Activated CD4-positive, alpha-beta T cell treated with anti-CD3 and anti-CD28 coated beads, Interleukin-2, amount 10 ng/mL, durations not matched to agents 24 days and 14 days (primary cell): ENCODE measurements at regions of chr1 and their contacts with region 1.

Region 1: GRCh38 chr1:183635606-183636333 is at the start of gene ARPC5:
- DNase-seq: peak; percentile 99
- H3K4me3 Mint-ChIP-seq: peak within 1 kb of the TSS; percentile 98
- H3K27ac Mint-ChIP-seq: peak within 1 kb of the TSS; percentile 100
- H3K4me1 Mint-ChIP-seq: peaks cover 29% of the 10 kb centered on the region
- H3K27me3 Mint-ChIP-seq: peaks cover 11% of the 10 kb centered on the region
- total RNA-seq, gene ARPC5: 144 and 149 TPM in 2 replicates

Region 2: DNA sequence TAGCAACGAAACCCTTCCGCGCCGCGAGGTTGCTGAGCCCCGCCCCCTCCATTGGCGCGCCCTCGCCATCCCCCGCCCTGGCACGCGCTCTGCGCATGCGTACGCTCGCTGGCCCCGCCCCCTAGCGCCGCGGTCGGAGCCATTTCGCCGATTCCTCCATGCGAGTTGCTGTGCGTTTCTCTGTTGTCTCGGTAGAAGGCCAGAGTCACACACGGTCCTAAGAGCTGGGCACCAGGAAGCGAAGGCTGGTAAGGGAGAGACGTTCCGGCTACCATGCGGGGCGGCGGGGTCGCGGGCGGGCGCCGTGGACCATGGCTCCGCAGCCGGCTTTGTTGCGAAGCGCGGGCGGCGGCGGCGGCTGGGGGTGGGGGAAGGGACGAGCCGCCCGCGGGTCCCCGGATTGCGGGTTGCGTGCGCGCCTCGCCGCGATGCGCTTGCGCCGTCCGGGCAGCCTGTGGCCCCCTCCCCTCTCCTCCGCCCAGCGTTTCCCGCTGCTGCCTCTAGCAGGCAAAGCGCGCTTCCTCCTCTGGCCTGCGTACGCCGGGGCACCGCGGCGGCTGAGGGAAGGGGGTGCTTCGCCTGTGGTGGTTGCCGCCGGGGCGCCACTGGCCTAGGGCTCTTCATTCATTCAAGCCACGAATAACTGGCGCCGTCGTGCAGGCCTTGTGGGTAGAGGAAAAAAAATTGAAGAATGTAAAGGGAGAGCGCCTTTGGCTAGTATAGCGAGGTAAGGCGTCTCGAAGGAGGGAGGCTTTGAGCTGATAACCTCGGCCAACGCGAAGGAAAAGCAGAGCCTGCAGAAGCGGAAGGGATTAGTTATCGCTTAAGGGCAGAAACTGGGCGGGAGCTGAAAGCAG is 796.3 kb before region 1 on chr1 and contains the start of gene DHX9:
- intact Hi-C with region 1: loop called (anchors 10 kb)
- DNase-seq: peak; percentile 99
- H3K4me3 Mint-ChIP-seq: peak within 1 kb of the TSS; percentile 92
- H3K27ac Mint-ChIP-seq: peak within 1 kb of the TSS; percentile 94
- H3K4me1 Mint-ChIP-seq: peaks cover 37% of the 10 kb centered on the region
- H3K27me3 Mint-ChIP-seq: peaks cover 3% of the 10 kb centered on the region
- total RNA-seq, gene DHX9: 344 and 355 TPM in 2 replicates

Region 3: GRCh38 chr1:183590244-183591191 is 45.3 kb before region 1 on chr1 and contains the start of gene NCF2:
- intact Hi-C with region 1: loop called (anchors 1 kb)
- DNase-seq: peak; percentile 89
- H3K4me3 Mint-ChIP-seq: peak within 1 kb of the TSS; percentile 63
- H3K27ac Mint-ChIP-seq: peak within 1 kb of the TSS; percentile 75
- H3K4me1 Mint-ChIP-seq: peaks cover 44% of the 10 kb centered on the region
- H3K27me3 Mint-ChIP-seq: no peaks in the 10 kb centered on the region
- total RNA-seq, gene NCF2: 5.3 and 6.2 TPM in 2 replicates

Region 4: DNA sequence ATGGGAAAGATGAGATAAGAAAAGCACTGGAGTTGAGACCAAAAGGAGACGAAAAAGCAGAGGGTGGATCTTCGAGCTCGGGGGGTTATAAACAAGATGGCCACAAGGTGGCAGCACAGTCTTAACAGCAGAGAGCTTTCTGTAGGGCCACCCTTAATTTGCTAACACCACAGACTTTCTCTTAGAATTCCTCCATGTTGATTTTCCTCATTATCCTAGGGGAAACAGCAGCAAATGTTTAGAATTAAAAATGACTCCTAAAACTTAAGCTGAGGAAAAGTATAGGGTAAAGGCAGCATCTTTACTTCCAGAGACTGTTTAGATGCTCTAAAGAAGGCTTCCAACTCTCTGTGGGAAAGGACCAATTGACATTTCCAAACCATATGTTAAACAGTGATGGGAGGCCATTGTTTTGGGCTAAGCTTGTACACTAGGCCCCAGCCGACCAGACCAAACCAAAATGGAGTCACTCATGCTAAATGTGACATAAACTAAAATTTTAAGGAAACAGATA is 19.8 kb after region 1 on chr1:
- intact Hi-C with region 1: loop called (anchors 1 kb)
- DNase-seq: peak; percentile 92
- H3K4me3 Mint-ChIP-seq: no peak overlapping the region
- H3K27ac Mint-ChIP-seq: peak overlapping the region; percentile 30
- H3K4me1 Mint-ChIP-seq: peaks cover 35% of the 10 kb centered on the region
- H3K27me3 Mint-ChIP-seq: peaks cover 4% of the 10 kb centered on the region

Region 5: DNA sequence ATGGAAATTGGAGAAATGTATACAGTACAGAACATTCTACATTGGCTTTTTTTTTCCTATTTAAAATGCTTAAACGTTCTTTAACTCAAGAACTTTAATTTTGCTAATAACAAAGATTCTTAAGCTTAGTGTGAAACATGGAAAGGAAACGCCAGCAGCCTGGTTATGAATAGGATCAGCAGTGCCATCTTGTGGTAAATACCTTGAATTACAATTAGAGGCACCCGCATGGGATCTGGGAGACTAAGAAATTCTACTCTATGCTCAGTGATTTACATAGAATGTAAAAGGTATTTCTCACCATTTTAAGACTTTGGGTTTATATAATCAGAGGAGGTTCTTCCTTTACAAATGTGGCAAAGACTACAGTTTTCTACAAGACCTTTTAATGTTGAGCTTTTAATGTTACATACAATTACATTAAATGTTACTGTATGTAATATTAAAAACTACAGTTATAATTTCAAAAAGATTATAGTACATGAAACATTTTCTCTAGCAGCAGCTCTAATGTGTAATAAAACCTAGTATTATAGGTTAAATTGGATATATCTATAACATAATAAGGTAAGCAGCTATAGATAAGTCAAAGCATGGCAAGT is 49.4 kb after region 1 on chr1:
- intact Hi-C with region 1: loop called (anchors 2 kb)
- DNase-seq: peak; percentile 78
- H3K4me3 Mint-ChIP-seq: no peak overlapping the region
- H3K27ac Mint-ChIP-seq: no peak overlapping the region
- H3K4me1 Mint-ChIP-seq: peaks cover 11% of the 10 kb centered on the region
- H3K27me3 Mint-ChIP-seq: peaks cover 30% of the 10 kb centered on the region

Region 6: DNA sequence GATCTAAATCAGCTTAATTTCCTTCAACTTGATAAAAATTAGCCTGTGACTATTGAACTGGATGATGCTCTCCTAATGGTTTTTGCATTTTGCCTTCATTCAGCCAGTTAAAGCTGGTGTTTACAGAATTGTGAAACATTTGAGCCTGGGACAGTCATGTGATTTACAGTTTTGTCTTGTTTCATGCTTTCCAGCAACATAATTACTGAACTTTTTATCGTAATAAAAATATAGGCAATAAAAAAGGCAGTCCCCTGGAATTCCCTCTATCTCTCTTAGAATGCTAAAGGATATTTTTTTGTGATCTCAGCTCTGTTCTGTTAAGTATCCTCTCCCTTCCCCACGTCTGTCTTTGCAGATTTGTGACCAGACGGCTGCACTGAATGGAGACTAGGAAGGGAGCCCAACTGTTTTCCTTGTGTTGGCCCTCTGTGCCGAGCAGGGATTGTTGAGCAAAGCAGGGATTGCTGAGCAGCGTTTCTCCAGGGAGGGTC is 98.8 kb after region 1 on chr1:
- intact Hi-C with region 1: no loop called
- DNase-seq: no peak
- H3K4me3 Mint-ChIP-seq: no peak overlapping the region
- H3K27ac Mint-ChIP-seq: no peak overlapping the region
- H3K4me1 Mint-ChIP-seq: peaks cover 2% of the 10 kb centered on the region
- H3K27me3 Mint-ChIP-seq: no peaks in the 10 kb centered on the region

Region 7: DNA sequence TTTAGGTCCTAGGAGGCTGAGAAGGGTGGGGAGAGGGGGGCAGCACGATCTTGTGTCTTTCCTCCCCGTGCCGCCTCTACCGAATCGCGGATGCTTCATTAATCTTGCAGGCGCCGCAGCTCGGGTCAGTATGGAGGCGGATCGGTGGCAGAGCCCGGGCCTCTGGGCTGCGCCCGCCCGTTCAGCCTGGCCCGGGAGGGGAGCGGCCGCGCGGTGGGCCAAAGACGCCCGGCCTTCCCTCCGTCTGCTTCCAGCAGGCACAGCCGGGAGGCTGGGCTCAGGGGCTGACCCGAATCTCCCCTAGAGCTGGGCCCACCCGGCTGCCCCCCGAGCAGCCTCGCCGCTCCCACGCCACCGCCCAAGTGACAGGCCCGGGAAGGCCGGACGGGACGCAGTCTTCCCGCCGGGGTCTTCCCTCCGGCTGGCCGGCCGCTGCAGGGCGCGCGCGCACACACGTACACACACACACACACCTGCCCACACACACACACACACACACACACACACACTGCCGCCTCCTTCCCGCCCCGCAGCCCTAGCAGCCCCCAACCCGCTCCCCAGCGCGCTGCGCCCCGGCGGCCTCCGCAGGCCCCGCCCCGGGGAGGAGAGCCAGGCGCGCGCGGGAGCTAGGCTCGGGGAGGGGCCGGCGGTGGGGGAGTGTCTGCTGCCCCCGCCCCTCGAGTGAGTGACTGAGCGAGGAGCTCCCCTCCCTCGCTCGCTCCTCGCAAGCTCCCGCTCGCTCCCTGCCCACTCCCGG is 750.7 kb after region 1 on chr1 and contains the start of gene C1orf21:
- intact Hi-C with region 1: loop called (anchors 5 kb)
- DNase-seq: peak; percentile 94
- H3K4me3 Mint-ChIP-seq: peak within 1 kb of the TSS; percentile 84
- H3K27ac Mint-ChIP-seq: peak within 1 kb of the TSS; percentile 83
- H3K4me1 Mint-ChIP-seq: peaks cover 16% of the 10 kb centered on the region
- H3K27me3 Mint-ChIP-seq: peaks cover 81% of the 10 kb centered on the region
- total RNA-seq, gene C1orf21: 1.8 and 2.5 TPM in 2 replicates

Region 8: DNA sequence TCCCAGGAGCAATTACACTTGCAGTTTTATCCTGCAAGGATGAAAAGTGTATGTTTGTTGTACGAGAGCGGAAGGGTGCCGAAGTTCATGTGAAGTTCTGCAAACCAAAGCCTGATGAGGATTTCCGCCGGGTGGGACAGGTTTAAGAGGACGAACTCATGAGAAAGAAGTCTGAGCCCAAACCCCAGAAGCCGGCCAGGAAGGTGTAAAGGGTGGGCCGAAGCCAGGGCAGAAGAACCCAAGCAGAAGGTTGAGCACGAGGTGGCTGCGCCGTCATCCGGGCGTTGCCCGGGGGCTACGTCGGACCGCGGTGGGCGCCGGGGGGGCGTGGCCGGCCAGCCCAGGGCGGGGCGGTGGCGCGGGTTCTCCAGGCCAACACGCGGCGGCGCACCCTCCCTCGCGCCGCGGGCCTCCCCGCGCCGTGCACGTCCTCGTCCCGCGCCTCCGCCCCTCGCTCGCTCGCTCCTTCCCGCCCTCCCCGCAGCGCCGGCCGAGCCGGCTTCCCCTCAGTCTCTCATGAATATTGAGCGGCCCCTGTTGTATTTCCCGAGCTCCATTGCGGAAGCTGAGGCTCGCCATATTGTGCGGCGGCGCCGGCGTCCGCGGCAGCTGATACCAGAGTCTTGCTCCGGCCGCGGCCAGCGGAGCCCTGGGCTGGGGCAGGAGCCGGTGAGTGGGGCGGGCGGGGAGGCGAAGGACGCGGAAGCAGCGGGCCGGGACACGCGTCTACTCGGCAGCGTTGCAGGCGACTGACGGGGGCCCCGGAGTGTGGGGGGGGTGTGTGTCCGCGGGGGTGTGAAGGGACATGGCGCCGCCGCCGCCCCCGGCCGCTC is 1409.4 kb after region 1 on chr1 and contains the start of gene RNF2:
- intact Hi-C with region 1: loop called (anchors 10 kb)
- DNase-seq: peak; percentile 91
- H3K4me3 Mint-ChIP-seq: peak within 1 kb of the TSS; percentile 93
- H3K27ac Mint-ChIP-seq: peak within 1 kb of the TSS; percentile 91
- H3K4me1 Mint-ChIP-seq: peaks cover 26% of the 10 kb centered on the region
- H3K27me3 Mint-ChIP-seq: peaks cover 18% of the 10 kb centered on the region
- total RNA-seq, gene RNF2: 17.8 and 21.1 TPM in 2 replicates